Activated CD4-positive, alpha-beta memory T cell treated with anti-CD3 and anti-CD28 coated beads, Interleukin-2, amount 10 ng/mL, durations not matched to agents 7 days and 5 days (primary cell): ENCODE measurements at regions of chr19 and their contacts with region 1.

Region 1: GRCh38 chr19:17282488-17283255 is 971 bp downstream of the ANKLE1 start:
- DNase-seq: peak; percentile 84
- H3K4me3 Mint-ChIP-seq: peak overlapping the region; percentile 85
- H3K27ac Mint-ChIP-seq: peak overlapping the region; percentile 75
- H3K4me1 Mint-ChIP-seq: peaks cover 14% of the 10 kb centered on the region
- H3K27me3 Mint-ChIP-seq: no peaks in the 10 kb centered on the region

Region 2: DNA sequence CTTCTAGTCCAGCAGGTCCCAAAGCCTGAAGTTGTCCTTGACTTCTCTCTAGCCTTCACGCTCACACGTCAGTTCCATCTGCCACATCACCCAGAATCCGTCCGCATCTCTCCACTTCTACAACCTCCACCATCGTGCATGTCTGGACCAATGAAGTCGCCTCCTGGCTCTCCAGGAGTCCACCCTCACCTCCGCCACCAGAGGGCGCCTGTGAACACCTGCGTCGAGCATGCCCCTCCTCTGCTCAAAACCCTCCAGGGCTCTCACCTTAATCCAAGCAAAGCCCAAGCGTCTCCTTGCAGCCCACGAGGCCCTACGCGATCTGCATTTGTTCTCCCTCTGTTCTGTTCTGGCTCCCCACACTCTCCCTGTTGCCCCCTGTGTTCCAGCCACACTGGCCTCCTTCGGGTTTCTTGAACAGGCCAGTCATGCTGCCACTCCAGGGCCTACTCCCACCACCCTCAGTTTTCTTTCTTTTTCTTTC is 21.8 kb before region 1 on chr19:
- CTCF ChIA-PET with region 1: interaction called, 64 read pairs
- POLR2A ChIA-PET with region 1: interaction called, 26 read pairs
- DNase-seq: peak; percentile 92
- H3K4me3 Mint-ChIP-seq: no peak overlapping the region
- H3K27ac Mint-ChIP-seq: no peak overlapping the region
- H3K4me1 Mint-ChIP-seq: peaks cover 19% of the 10 kb centered on the region
- H3K27me3 Mint-ChIP-seq: no peaks in the 10 kb centered on the region